Activated CD8-positive, alpha-beta T cell treated with anti-CD3 and anti-CD28 coated beads, Interleukin-2, amount 10 ng/mL, durations not matched to agents 7 days and 5 days (primary cell): ENCODE measurements at regions of chr19 and their contacts with region 1.

Region 1: DNA sequence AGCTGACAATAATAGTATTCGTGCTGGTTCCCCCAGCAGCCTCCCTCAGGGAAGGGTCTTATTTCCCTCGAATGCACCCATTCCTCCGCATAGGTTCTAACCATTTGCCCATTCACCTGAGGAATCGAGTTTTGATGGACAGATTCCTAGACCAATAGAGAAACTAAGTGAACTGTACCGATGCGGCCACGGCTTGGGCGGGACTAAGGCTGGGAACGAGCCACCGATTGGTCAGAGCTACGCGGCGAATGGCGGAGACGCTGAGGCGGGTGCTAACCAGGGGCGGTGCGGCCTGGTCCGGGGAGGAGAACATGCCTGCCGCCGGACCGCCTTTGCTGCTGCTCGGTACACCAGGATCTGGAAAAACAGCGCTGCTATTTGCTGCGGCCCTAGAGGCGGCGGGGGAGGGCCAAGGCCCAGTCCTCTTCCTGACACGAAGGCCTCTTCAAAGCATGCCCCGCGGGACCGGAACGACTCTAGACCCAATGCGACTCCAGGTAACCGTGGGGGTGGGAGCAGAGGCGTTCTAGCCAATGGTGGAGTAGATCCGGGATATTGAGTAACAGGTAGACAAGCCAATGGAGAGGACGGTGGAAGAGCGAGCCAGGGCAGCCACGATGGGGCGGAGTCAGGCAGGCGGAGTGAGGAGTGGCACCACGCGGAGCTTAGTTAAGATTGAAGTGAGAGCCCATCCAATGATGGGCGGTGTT is at the start of gene SWSAP1:
- DNase-seq: peak; percentile 99
- ATAC-seq: peak; percentile 96
- H3K4me3 Mint-ChIP-seq: no peak within 1 kb of the TSS
- H3K27ac Mint-ChIP-seq: no peak within 1 kb of the TSS
- H3K4me1 Mint-ChIP-seq: peaks cover 29% of the 10 kb centered on the region
- H3K27me3 Mint-ChIP-seq: no peaks in the 10 kb centered on the region
- total RNA-seq, gene SWSAP1: 3.1 to 3.4 TPM

Region 2: DNA sequence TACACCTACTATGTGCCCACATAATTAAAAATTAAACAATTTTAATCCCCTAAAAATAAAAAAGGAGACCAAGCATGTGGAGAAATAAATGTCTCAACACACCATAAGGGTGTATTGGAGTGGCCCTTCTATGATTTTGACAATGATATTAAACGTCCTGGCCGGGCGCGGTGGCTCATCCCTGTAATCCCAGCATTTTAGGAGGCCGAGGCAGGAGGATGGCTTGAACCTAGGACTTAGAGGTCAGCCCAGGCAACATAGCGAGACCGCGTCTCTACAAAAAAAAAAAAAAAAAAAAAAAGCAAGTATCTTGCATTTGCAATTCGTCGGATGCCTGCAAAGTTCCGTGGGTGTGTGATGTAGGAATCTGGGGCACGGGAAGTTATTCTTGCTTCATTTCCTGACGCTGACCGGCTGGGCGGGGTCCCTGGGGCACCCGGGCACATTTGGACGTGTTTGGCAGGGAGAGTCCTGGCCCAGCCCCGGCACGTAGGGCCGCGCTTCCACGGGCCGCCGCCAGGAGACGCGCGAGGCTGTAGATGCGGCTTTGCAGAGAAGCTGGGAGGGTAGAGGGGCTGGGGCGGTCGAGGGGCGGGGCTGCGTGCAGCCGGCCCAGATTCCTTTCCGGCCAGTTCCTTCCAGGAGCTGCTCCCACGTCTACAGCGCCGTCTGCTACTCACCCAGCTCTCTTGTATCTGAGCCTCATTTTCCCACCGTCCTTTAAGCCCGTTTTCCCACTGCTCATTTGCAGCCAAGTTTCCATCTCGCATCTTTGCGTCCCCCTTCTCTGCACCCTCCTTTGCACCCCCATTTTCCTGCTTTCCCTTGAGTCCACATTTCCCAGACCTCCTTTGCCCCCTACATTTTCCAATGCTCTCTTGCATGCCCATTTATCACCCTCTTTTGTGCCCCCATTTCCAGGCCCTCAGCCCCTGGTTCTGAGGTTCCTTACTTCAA is 80.9 kb before region 1 on chr19:
- CTCF ChIA-PET with region 1: interaction called, 14 read pairs
- POLR2A ChIA-PET with region 1: interaction called, 3 read pairs
- DNase-seq: peak; percentile 86
- ATAC-seq: peak; percentile 98
- H3K4me3 Mint-ChIP-seq: peak overlapping the region; percentile 54
- H3K27ac Mint-ChIP-seq: no peak overlapping the region
- H3K4me1 Mint-ChIP-seq: peaks cover 10% of the 10 kb centered on the region
- H3K27me3 Mint-ChIP-seq: peaks cover 23% of the 10 kb centered on the region

Region 3: GRCh38 chr19:11324079-11324661 is 50.4 kb before region 1 on chr19:
- CTCF ChIA-PET with region 1: interaction called, 3 read pairs
- POLR2A ChIA-PET with region 1: interaction called, 15 read pairs
- DNase-seq: peak; percentile 79
- ATAC-seq: peak; percentile 85
- H3K4me3 Mint-ChIP-seq: peak overlapping the region; percentile 73
- H3K27ac Mint-ChIP-seq: peak overlapping the region; percentile 95
- H3K4me1 Mint-ChIP-seq: peaks cover 37% of the 10 kb centered on the region
- H3K27me3 Mint-ChIP-seq: no peaks in the 10 kb centered on the region

Region 4: DNA sequence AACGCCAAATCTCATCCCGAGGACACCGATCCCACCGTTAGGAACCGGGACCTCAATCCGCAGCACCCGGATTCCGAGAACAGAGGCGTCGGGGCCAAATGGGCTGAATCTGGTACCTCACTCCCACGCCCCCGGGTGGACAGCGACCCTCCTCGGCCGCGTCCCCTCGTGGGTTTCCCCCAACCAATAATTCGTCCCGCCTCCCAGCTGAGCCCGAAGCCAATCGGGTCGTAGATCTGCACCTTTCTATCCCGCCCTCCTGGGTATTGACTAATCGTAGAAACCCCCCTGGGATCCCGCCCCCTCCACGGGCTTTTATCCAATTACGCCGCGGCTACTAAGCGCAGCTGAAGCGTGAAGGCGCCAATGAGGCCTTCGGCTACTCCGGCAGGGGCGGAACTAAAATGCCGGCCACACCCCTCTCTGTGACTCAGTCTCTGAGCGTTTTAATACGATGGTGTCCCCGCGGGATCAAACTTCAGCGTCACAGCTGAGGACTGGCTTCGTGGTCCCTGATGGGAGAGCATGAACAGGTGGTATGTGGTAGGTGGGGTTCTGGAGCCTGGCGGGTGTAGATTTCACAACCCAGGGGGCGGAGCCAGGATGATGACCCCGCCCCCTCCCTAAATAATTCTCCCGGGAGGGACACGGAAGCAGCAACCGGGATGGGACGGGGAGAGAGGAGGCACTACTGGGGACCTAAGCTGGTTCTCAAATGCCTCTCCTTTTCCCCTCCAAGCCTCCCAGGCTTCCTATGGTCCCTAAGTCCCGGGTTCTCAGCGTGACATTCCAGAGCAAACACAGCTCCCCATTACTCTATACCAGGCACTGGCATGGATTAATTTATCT is 28.3 kb before region 1 on chr19 and contains the starts of genes CCDC159 and TMEM205:
- CTCF ChIA-PET with region 1: interaction called, 10 read pairs
- POLR2A ChIA-PET with region 1: interaction called, 12 read pairs
- DNase-seq: peak; percentile 100
- ATAC-seq: peak; percentile 99
- H3K4me3 Mint-ChIP-seq: peak within 1 kb of the TSS; percentile 85
- H3K27ac Mint-ChIP-seq: peak within 1 kb of the TSS; percentile 92
- H3K4me1 Mint-ChIP-seq: peaks cover 26% of the 10 kb centered on the region
- H3K27me3 Mint-ChIP-seq: no peaks in the 10 kb centered on the region
- total RNA-seq, gene CCDC159: 9.9 to 13.6 TPM
- total RNA-seq, gene TMEM205: 23.6 to 29.6 TPM

Region 5: GRCh38 chr19:11435058-11435832 is 60.7 kb after region 1 on chr19 and contains the starts of genes ODAD3 and PRKCSH:
- CTCF ChIA-PET with region 1: interaction called, 16 read pairs
- POLR2A ChIA-PET with region 1: interaction called, 10 read pairs
- DNase-seq: peak; percentile 100
- ATAC-seq: peak; percentile 96
- H3K4me3 Mint-ChIP-seq: peak within 1 kb of the TSS; percentile 100
- H3K27ac Mint-ChIP-seq: peak within 1 kb of the TSS; percentile 100
- H3K4me1 Mint-ChIP-seq: peaks cover 19% of the 10 kb centered on the region
- H3K27me3 Mint-ChIP-seq: peaks cover 6% of the 10 kb centered on the region
- total RNA-seq, gene ODAD3: not detected
- total RNA-seq, gene PRKCSH: 285 to 302 TPM

Region 6: GRCh38 chr19:11482384-11483050 is 107.9 kb after region 1 on chr19:
- CTCF ChIA-PET with region 1: interaction called, 35 read pairs
- POLR2A ChIA-PET with region 1: interaction called, 5 read pairs
- DNase-seq: peak; percentile 91
- ATAC-seq: peak; percentile 80
- H3K4me3 Mint-ChIP-seq: peak overlapping the region; percentile 70
- H3K27ac Mint-ChIP-seq: peak overlapping the region; percentile 72
- H3K4me1 Mint-ChIP-seq: peaks cover 28% of the 10 kb centered on the region
- H3K27me3 Mint-ChIP-seq: peaks cover 27% of the 10 kb centered on the region